ENCODE measurements at regions of chr3 and their contacts with region 1.

Region 1: DNA sequence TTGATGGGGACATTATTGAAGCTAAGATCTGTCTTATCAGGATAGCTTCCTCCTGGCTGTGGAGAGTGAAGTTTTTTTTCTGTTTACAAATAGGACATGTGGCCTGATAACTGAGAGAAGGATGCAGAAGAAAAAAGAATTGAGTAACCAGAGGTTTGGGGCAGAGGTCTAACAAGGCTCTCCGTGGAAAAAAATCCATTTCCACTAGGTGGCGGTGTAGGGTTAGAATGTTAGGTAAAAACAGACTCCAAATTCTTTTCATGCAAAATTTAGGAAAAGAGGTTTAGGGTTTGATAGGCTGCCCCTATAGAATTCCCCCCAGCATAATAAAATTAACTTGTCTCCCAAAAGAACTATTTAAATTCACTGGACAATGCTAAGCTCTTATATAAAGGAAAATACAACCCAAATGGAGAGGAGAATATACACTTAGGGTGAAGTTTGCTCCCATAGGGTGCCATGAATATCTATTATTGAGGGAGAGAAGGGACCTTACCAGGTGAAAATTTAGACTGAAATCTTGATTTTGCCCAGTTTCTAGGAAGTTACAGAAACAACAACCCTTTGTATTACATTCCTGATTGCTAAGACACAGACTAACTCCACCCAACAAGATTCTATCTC is 1560.4 kb downstream of the OTOL1 start:
- DNase-seq: peak; percentile 70
- H3K4me3 Mint-ChIP-seq: no peak overlapping the region
- H3K27ac Mint-ChIP-seq: no peak overlapping the region
- H3K4me1 Mint-ChIP-seq: no peaks in the 10 kb centered on the region
- H3K27me3 Mint-ChIP-seq: no peaks in the 10 kb centered on the region
- CTCF ChIP-seq: peak; percentile 68

Region 2: DNA sequence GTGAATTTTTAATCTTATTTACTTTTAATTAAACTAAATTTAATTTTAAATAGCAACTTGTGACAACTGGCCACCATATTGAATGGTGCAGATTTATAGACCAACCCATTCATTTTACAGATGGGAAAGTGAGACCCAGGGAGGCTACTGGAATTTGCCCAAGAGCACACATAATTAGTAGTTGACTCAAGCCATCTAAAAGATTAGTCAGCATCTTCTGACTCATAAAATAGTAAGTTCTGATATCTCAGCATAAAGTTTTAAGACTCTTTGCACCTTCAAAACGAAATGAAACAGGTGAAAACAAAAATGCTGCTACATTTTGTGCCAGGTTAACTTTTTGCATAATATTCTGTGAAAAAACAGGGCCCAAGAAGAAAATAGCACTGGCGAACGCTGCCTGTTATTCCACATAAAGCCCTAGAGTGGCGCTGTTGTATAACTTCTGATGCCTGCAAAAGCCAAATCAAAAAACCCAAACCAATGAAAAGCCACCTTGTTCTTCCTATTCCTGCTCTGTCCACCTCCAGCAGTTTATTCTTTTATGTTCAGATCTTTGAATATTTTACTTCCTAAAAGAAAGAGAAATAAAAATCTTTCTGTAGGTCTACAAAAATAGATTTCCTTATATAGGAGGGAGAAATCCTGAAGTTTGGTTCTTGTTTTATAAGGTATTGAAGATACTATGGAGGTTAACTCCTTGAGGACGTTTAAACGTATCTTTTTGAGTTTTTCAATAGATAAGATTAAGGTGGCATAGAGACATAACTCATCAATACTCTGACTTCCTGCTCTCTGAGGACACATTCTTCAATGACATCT is 1497.6 kb before region 1 on chr3:
- CTCF ChIA-PET with region 1: interaction called, 4 read pairs
- POLR2A ChIA-PET with region 1: no interaction called
- intact Hi-C with region 1: loop called (anchors 5 kb)
- DNase-seq: peak; percentile 65
- H3K4me3 Mint-ChIP-seq: peak overlapping the region; percentile 3
- H3K27ac Mint-ChIP-seq: no peak overlapping the region
- H3K4me1 Mint-ChIP-seq: peaks cover 4% of the 10 kb centered on the region
- H3K27me3 Mint-ChIP-seq: no peaks in the 10 kb centered on the region
- CTCF ChIP-seq: peak; percentile 81

Region 3: DNA sequence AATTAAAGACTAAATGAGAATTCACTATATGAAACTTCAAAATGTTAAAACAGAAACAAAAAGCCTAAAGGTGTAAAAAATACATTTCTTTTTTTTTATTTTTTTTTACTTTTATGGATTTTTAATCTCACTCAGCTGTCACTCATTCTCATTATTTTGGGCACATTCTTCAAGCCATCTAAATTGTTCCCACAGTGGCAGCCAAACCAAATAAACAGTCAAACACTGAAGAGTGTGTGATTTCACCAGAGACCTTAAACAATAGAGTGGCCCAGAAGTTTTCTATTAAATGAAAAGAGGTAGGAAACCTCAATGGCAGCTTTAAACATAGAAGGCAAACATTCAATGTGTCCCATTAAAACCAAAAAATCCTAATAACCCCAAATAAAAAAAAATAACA is 944.3 kb before region 1 on chr3:
- CTCF ChIA-PET with region 1: no interaction called
- POLR2A ChIA-PET with region 1: no interaction called
- intact Hi-C with region 1: no loop called
- DNase-seq: peak; percentile 36
- H3K4me3 Mint-ChIP-seq: no peak overlapping the region
- H3K27ac Mint-ChIP-seq: no peak overlapping the region
- H3K4me1 Mint-ChIP-seq: no peaks in the 10 kb centered on the region
- H3K27me3 Mint-ChIP-seq: no peaks in the 10 kb centered on the region
- CTCF ChIP-seq: no peak

Region 4: GRCh38 chr3:162780313-162780712 is 276.7 kb before region 1 on chr3:
- CTCF ChIA-PET with region 1: interaction called, 4 read pairs
- POLR2A ChIA-PET with region 1: no interaction called
- intact Hi-C with region 1: loop called (anchors 10 kb)
- DNase-seq: no peak
- H3K4me3 Mint-ChIP-seq: no peak overlapping the region
- H3K27ac Mint-ChIP-seq: no peak overlapping the region
- H3K4me1 Mint-ChIP-seq: no peaks in the 10 kb centered on the region
- H3K27me3 Mint-ChIP-seq: no peaks in the 10 kb centered on the region
- CTCF ChIP-seq: no peak

Region 5: DNA sequence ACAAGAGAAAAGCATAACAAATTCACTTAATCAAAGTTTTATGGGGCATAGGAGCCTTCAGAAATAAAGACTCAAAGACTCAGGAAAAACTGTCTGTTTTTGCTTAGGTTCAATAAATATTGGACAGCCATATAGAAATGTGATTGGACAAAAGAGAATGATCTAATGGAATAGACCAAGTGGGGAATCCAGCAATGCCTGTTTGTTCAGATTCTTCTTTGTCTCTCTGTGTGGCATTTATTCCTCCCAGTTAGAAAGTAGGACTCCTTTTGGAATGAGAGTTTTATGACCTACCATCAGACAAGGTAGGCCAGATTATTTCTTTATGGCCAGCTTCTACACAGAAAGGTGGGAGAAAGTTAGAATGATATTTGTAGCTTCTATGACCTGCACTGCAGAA is 100.3 kb before region 1 on chr3:
- CTCF ChIA-PET with region 1: no interaction called
- POLR2A ChIA-PET with region 1: no interaction called
- intact Hi-C with region 1: no loop called
- DNase-seq: no peak
- H3K4me3 Mint-ChIP-seq: no peak overlapping the region
- H3K27ac Mint-ChIP-seq: no peak overlapping the region
- H3K4me1 Mint-ChIP-seq: no peaks in the 10 kb centered on the region
- H3K27me3 Mint-ChIP-seq: no peaks in the 10 kb centered on the region
- CTCF ChIP-seq: no peak

Region 6: GRCh38 chr3:163071697-163072096 is 14.7 kb after region 1 on chr3:
- CTCF ChIA-PET with region 1: interaction called, 17 read pairs
- POLR2A ChIA-PET with region 1: interaction called, 3 read pairs
- intact Hi-C with region 1: no loop called
- DNase-seq: peak; percentile 57
- H3K4me3 Mint-ChIP-seq: no peak overlapping the region
- H3K27ac Mint-ChIP-seq: peak overlapping the region; percentile 31
- H3K4me1 Mint-ChIP-seq: no peaks in the 10 kb centered on the region
- H3K27me3 Mint-ChIP-seq: no peaks in the 10 kb centered on the region
- CTCF ChIP-seq: no peak

Region 7: DNA sequence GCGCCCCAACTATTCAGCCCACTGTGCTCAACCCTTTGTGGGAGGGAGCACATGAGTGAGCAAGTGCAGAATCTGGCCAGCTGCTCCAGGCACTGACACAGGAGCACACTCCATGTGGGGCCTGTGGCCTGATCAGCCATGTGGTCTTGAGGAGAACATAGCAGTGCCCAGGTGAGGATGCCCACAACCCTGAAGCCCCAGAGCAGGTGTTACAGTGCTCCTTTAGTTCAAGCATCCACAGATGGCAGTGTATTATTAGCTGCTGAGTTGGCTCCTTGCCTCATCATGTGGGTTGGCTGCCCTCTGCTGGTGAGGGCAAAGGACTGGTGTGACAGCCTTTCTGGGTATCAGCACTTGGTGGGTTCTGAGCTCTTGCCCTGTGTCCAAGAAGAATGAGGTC is 433.1 kb after region 1 on chr3:
- CTCF ChIA-PET with region 1: interaction called, 17 read pairs
- POLR2A ChIA-PET with region 1: no interaction called
- intact Hi-C with region 1: loop called (anchors 1 kb)
- DNase-seq: peak; percentile 76
- H3K4me3 Mint-ChIP-seq: no peak overlapping the region
- H3K27ac Mint-ChIP-seq: no peak overlapping the region
- H3K4me1 Mint-ChIP-seq: no peaks in the 10 kb centered on the region
- H3K27me3 Mint-ChIP-seq: no peaks in the 10 kb centered on the region
- CTCF ChIP-seq: peak; percentile 72